Naive thymus-derived CD4-positive, alpha-beta T cell (primary cell): ENCODE measurements at regions of chr1 and their contacts with region 1.

Region 1: GRCh38 chr1:156456622-156457465 is 43.7 kb downstream of the MEF2D start:
- DNase-seq: peak; percentile 88 to 99 (median 96)
- ATAC-seq: peak; percentile 91
- H3K4me3 ChIP-seq: peak overlapping the region; percentile 87
- H3K4me3 Mint-ChIP-seq: peak overlapping the region; percentile 91 to 97 (median 94)
- H3K27ac ChIP-seq: peak overlapping the region; percentile 97
- H3K27ac Mint-ChIP-seq: peak overlapping the region; percentile 96 to 100 (median 99)
- H3K4me1 ChIP-seq: peaks cover 4 to 6% of the 10 kb centered on the region in 2 donors
- H3K4me1 Mint-ChIP-seq: peaks cover 4 to 23% (median 11%) of the 10 kb centered on the region in 7 donors
- H3K27me3 ChIP-seq: no peaks in the 10 kb centered on the region
- H3K27me3 Mint-ChIP-seq: peaks cover 0 to 10% (median 0%) of the 10 kb centered on the region in 5 donors

Region 2: DNA sequence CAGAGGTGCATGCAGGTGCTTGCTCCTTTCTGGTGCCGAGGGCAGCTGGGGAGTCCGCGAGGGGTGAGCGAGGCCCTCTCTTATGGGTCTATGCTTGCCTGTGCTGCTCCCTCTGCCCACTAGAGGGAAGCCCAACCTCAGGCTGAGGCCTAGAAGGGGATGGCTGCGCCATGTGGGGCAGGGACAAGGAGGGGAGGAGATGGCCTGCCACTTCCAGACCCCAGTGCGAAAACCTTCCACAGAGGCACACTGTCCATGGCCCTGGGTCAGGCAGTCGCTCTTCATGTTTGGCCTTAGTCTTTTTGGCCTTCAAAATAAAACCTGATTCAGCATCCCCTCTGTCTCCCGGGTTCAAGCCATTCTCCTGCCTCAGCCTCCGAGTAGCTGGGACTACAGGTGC is 73.8 kb before region 1 on chr1:
- CTCF ChIA-PET with region 1: interaction called, 14 read pairs
- POLR2A ChIA-PET with region 1: interaction called, 8 read pairs
- intact Hi-C with region 1: loop called in 1 of 2 experiments (anchors 1 kb)
- DNase-seq: peak; percentile 9 to 57 (median 46)
- ATAC-seq: peak; percentile 90
- H3K4me3 ChIP-seq: no peak overlapping the region
- H3K4me3 Mint-ChIP-seq: no peak overlapping the region
- H3K27ac ChIP-seq: no peak overlapping the region
- H3K27ac Mint-ChIP-seq: no peak overlapping the region
- H3K4me1 ChIP-seq: peaks cover 6 to 8% of the 10 kb centered on the region in 2 donors
- H3K4me1 Mint-ChIP-seq: peaks cover 5 to 7% (median 6%) of the 10 kb centered on the region in 7 donors
- H3K27me3 ChIP-seq: peaks cover 0 to 3% of the 10 kb centered on the region in 2 donors
- H3K27me3 Mint-ChIP-seq: peaks cover 0 to 23% (median 12%) of the 10 kb centered on the region in 5 donors

Region 3: DNA sequence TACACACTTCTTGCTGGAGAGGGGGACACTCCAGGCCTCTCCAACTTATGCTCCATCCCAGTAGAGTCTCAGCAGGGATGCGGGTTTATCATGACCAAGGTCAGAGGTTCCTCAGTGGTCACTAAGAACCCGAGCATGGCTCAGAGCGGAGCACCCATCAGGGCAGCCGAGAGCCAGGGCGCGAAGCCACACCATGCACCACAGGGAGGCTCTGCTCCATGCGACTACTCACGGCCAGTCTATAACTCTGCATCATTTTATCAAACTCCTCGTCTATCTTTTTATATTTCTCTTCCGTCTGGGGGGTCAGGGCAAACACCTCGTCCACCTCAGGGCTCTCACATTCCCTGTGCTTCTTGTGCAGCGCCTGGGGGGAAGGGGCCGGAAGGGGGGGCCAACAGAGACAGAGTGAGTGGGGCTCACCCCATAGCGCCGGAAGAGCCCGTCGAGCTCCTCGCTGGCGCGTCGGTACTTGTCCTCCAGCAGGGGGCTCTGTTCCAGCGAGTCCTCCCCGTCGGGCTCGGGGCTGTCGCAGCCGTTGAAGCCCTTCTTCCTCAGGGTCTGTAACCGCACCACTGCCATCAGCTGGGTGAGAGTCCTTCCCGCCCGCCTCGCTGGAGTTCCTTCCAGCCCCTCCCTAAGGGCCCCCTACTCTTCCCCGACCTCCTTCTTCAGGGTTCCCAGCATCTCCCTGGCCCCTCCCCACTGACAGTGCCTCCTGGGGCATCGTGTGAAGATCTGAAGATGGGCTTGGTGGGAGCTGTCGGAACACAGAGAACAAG is 23.8 kb after region 1 on chr1:
- CTCF ChIA-PET with region 1: interaction called, 4 read pairs
- POLR2A ChIA-PET with region 1: interaction called, 11 read pairs
- intact Hi-C with region 1: loop called in 1 of 2 experiments (anchors 1 kb)
- DNase-seq: peak; percentile 63 to 88 (median 79)
- ATAC-seq: peak; percentile 87
- H3K4me3 ChIP-seq: no peak overlapping the region
- H3K4me3 Mint-ChIP-seq: peak overlapping the region in 6 of 10 donors; percentile 23 to 51 (median 43)
- H3K27ac ChIP-seq: peak overlapping the region; percentile 46
- H3K27ac Mint-ChIP-seq: peak overlapping the region; percentile 74 to 99 (median 89)
- H3K4me1 ChIP-seq: peaks cover 12 to 25% of the 10 kb centered on the region in 2 donors
- H3K4me1 Mint-ChIP-seq: peaks cover 42 to 67% (median 54%) of the 10 kb centered on the region in 7 donors
- H3K27me3 ChIP-seq: no peaks in the 10 kb centered on the region
- H3K27me3 Mint-ChIP-seq: no peaks in the 10 kb centered on the region

Region 4: GRCh38 chr1:156583821-156584622 is 127.2 kb after region 1 on chr1:
- CTCF ChIA-PET with region 1: interaction called, 4 read pairs
- POLR2A ChIA-PET with region 1: interaction called, 9 read pairs
- intact Hi-C with region 1: loop called in 1 of 2 experiments (anchors 1 kb)
- DNase-seq: peak in 8 of 9 donors; percentile 49 to 76 (median 69)
- ATAC-seq: peak; percentile 81
- H3K4me3 ChIP-seq: no peak overlapping the region
- H3K4me3 Mint-ChIP-seq: peak overlapping the region in 8 of 10 donors; percentile 9 to 77 (median 54)
- H3K27ac ChIP-seq: peak overlapping the region; percentile 3
- H3K27ac Mint-ChIP-seq: peak overlapping the region in 8 of 9 donors; percentile 26 to 88 (median 72)
- H3K4me1 ChIP-seq: peaks cover 15 to 25% of the 10 kb centered on the region in 2 donors
- H3K4me1 Mint-ChIP-seq: peaks cover 6 to 40% (median 29%) of the 10 kb centered on the region in 7 donors
- H3K27me3 ChIP-seq: no peaks in the 10 kb centered on the region
- H3K27me3 Mint-ChIP-seq: no peaks in the 10 kb centered on the region

Region 5: GRCh38 chr1:156601122-156601830 is 144.4 kb after region 1 on chr1 and contains the start of gene GPATCH4:
- CTCF ChIA-PET with region 1: interaction called, 4 read pairs
- POLR2A ChIA-PET with region 1: interaction called, 8 read pairs
- intact Hi-C with region 1: loop called (anchors 1 to 2 kb)
- DNase-seq: peak; percentile 49 to 79 (median 74)
- ATAC-seq: peak; percentile 88
- H3K4me3 ChIP-seq: peak within 1 kb of the TSS; percentile 68
- H3K4me3 Mint-ChIP-seq: peak within 1 kb of the TSS; percentile 90 to 100 (median 93)
- H3K27ac ChIP-seq: peak within 1 kb of the TSS; percentile 86
- H3K27ac Mint-ChIP-seq: peak within 1 kb of the TSS; percentile 92 to 99 (median 94)
- H3K4me1 ChIP-seq: peaks cover 9 to 19% of the 10 kb centered on the region in 2 donors
- H3K4me1 Mint-ChIP-seq: peaks cover 24 to 41% (median 36%) of the 10 kb centered on the region in 7 donors
- H3K27me3 ChIP-seq: no peaks in the 10 kb centered on the region
- H3K27me3 Mint-ChIP-seq: no peaks in the 10 kb centered on the region
- total RNA-seq, gene GPATCH4: 33.3 to 49.6 (median 39.1) TPM

Region 6: DNA sequence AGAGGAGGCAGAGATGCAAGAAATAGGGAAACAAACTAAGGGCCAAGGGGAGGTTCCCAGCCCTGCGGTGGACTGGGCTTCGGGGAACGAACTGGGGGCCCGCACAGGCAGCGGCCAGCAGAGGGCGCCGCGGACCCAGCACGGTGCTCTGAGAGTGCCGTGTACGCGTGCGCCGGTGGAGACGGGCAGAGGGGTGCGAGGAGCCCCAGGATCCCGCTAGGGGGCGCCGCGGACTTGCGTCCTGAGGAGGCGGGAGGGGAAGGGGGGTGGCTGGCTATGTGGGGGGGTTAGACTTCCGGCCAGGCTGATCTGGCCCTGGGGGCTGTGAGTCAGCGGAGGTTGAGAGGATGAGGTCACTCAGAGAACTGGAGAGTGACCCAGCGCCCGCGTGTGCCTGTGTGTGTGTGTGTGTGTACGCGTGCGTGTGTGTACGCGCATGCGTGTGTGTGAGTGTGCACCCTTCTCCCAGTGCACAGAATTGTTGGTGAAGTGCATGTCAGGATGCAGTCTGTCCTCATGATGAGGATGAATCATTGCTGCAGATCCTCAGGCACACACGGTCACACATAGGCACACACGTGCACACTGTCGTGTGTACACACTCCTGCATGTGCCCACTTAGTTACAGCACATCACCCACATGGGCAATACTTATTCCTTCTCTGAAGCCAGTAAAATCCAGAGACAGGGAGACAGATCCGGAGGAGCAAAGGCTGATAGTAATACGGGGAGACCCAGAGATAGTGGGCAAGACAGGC is 203.3 kb after region 1 on chr1:
- CTCF ChIA-PET with region 1: no interaction called
- POLR2A ChIA-PET with region 1: no interaction called
- intact Hi-C with region 1: loop called in 1 of 2 experiments (anchors 2 kb)
- DNase-seq: peak; percentile 82 to 96 (median 89)
- ATAC-seq: peak; percentile 95
- H3K4me3 ChIP-seq: no peak overlapping the region
- H3K4me3 Mint-ChIP-seq: peak overlapping the region in 9 of 10 donors; percentile 4 to 90 (median 48)
- H3K27ac ChIP-seq: no peak overlapping the region
- H3K27ac Mint-ChIP-seq: peak overlapping the region in 8 of 9 donors; percentile 53 to 87 (median 69)
- H3K4me1 ChIP-seq: peaks cover 32 to 39% of the 10 kb centered on the region in 2 donors
- H3K4me1 Mint-ChIP-seq: peaks cover 33 to 62% (median 44%) of the 10 kb centered on the region in 7 donors
- H3K27me3 ChIP-seq: peaks cover 0 to 13% of the 10 kb centered on the region in 2 donors
- H3K27me3 Mint-ChIP-seq: peaks cover 18 to 30% (median 24%) of the 10 kb centered on the region in 5 donors

Region 7: GRCh38 chr1:156767101-156767878 is 310.4 kb after region 1 on chr1 and contains the start of gene PRCC:
- CTCF ChIA-PET with region 1: no interaction called
- POLR2A ChIA-PET with region 1: no interaction called
- intact Hi-C with region 1: loop called in 1 of 2 experiments (anchors 2 kb)
- DNase-seq: peak; percentile 83 to 100 (median 98)
- ATAC-seq: peak; percentile 94
- H3K4me3 ChIP-seq: peak within 1 kb of the TSS; percentile 89
- H3K4me3 Mint-ChIP-seq: no peak within 1 kb of the TSS
- H3K27ac ChIP-seq: peak within 1 kb of the TSS; percentile 98
- H3K27ac Mint-ChIP-seq: peak within 1 kb of the TSS in 3 of 9 donors; percentile 13 to 91 (median 88)
- H3K4me1 ChIP-seq: peaks cover 23 to 36% of the 10 kb centered on the region in 2 donors
- H3K4me1 Mint-ChIP-seq: peaks cover 35 to 46% (median 37%) of the 10 kb centered on the region in 7 donors
- H3K27me3 ChIP-seq: no peaks in the 10 kb centered on the region
- H3K27me3 Mint-ChIP-seq: no peaks in the 10 kb centered on the region
- total RNA-seq, gene PRCC: 53.2 to 88.9 (median 61.7) TPM